Lower lobe of right lung (tissue), 2 donors: ENCODE measurements at regions of chr7 and their contacts with region 1.

Region 1: DNA sequence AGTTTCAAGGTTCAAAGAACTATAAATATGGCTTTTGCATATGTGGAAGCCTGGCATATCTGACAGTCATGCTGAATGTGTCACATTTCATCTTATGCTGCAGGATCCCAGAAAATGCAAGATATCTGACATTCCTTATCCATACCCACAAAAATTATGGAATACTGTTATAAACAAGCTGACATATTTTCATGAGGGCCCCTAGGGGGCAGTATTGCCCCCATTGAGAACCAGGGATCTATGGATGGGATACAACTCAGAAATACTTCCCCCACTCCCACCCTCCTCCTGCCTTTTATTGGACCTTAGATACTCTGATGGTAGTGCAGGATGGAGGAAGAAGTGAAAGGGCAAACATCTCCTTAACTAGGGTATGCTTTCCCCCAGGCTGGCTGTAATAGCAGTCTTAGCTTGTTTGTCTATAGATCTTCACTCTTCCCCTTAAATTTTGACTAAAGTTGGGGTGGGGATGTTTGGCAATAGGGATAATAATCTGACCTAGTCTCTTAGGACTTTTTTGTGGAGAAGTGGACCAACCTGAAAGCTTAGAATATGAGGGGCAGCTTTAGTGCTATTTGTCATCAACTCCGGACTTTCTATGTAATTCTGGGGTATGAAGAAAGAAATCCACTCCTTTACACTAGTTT is 3.5 kb upstream of the GNGT1 start:
- DNase-seq: no peak
- ATAC-seq: peak; percentile 46 to 53
- H3K4me3 ChIP-seq: no peak overlapping the region
- H3K27ac ChIP-seq: no peak overlapping the region
- H3K4me1 ChIP-seq: no peaks in the 10 kb centered on the region
- H3K27me3 ChIP-seq: no peaks in the 10 kb centered on the region
- CTCF ChIP-seq: peak; percentile 81

Region 2: GRCh38 chr7:94087664-94088352 is 184.9 kb after region 1 on chr7:
- intact Hi-C with region 1: loop called (anchors 10 kb)
- DNase-seq: no peak
- ATAC-seq: peak; percentile 68 to 84
- H3K4me3 ChIP-seq: peak overlapping the region; percentile 42
- H3K27ac ChIP-seq: no peak overlapping the region
- H3K4me1 ChIP-seq: peaks cover 17% of the 10 kb centered on the region
- H3K27me3 ChIP-seq: no peaks in the 10 kb centered on the region
- CTCF ChIP-seq: peak; percentile 75